ENCODE measurements at regions of chr1 and their contacts with region 1.

Region 1: DNA sequence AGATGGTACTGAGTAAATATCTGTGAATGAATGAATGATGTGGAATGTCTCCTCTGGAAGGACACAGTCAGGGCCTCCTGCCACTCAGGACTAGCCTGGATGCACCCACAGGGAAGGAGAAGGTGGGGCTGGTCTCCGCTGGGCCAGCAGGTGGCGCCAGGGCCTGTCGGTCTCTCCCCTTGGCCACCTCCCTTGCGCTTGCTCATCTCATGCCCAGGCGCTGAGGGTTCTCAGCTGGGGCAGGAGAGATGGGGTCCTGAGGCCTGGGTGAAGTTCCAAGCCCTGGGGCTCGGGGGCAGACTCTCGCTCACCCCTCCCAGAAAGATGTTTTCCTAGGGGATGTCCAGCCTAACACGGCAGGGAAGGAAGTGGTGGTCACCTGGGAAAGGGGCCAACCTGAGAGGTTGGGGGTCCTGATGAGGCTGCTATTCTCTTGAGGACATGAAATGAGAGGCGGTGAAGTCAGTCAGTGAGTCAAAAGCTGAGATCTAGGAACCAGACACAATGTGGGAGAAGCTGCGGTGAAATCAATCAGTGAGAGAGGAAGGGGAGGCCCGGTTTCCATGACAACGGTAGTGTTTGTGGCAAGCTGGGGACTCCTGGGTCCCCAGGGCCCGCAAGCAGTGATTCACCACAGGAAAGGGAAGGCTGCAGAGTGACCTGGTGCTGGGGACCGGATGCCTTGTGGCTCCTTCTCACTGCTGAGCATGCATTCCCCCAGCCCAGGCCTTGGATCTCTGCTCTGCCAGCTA is 14.6 kb upstream of the MEX3A start:
- H3K4me3 ChIP-seq: no peak overlapping the region
- H3K27ac ChIP-seq: no peak overlapping the region
- H3K4me1 ChIP-seq: no peaks in the 10 kb centered on the region
- CTCF ChIP-seq: peak; percentile 93

Region 2: GRCh38 chr1:156082309-156083091 is 14.3 kb before region 1 on chr1 and contains the start of gene MEX3A:
- CTCF ChIA-PET with region 1: interaction called, 11 read pairs
- POLR2A ChIA-PET with region 1: interaction called, 3 read pairs
- H3K4me3 ChIP-seq: peak within 1 kb of the TSS; percentile 77
- H3K27ac ChIP-seq: peak within 1 kb of the TSS; percentile 64
- H3K4me1 ChIP-seq: peaks cover 3% of the 10 kb centered on the region; the same call in 1 of the 2 replicates
- CTCF ChIP-seq: no peak; the same call in 1 of the 2 replicates

Region 3: DNA sequence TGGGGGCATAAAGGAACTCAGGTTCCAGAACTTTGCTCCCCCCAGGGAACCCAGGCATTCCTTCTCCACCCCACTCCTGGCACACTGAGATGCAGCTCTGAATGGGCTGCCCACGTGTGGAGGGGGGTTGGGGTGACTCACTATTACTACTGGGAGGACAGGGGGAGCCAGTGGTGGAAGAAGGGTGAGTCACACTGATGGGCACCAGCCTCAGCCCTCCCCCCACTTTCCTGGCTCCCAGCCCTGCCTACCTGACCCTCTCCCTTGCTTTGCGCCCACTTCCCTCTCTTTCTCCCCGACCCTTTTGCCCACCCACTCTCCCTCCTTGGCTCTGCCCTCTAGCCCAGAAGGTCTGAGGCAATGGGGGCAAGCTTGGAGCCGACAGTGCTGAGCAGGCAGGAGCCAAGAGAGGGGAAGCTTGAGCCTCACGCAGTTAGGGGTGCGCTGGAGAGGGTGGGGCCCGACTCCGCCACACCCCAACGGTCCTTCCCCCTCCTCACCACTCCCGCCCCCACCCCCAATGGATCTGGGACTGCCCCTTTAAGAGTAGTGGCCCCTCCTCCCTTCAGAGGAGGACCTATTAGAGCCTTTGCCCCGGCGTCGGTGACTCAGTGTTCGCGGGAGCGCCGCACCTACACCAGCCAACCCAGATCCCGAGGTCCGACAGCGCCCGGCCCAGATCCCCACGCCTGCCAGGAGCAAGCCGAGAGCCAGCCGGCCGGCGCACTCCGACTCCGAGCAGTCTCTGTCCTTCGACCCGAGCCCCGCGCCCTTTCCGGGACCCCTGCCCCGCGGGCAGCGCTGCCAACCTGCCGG is 17.5 kb after region 1 on chr1 and contains the start of gene LMNA:
- CTCF ChIA-PET with region 1: interaction called, 1,029 read pairs
- POLR2A ChIA-PET with region 1: interaction called, 63 read pairs
- H3K4me3 ChIP-seq: peak within 1 kb of the TSS; percentile 69
- H3K27ac ChIP-seq: peak within 1 kb of the TSS; percentile 66; the same call in 1 of the 2 replicates
- H3K4me1 ChIP-seq: peaks cover 4% of the 10 kb centered on the region
- CTCF ChIP-seq: peak; percentile 1; the same call in 1 of the 2 replicates

Region 4: DNA sequence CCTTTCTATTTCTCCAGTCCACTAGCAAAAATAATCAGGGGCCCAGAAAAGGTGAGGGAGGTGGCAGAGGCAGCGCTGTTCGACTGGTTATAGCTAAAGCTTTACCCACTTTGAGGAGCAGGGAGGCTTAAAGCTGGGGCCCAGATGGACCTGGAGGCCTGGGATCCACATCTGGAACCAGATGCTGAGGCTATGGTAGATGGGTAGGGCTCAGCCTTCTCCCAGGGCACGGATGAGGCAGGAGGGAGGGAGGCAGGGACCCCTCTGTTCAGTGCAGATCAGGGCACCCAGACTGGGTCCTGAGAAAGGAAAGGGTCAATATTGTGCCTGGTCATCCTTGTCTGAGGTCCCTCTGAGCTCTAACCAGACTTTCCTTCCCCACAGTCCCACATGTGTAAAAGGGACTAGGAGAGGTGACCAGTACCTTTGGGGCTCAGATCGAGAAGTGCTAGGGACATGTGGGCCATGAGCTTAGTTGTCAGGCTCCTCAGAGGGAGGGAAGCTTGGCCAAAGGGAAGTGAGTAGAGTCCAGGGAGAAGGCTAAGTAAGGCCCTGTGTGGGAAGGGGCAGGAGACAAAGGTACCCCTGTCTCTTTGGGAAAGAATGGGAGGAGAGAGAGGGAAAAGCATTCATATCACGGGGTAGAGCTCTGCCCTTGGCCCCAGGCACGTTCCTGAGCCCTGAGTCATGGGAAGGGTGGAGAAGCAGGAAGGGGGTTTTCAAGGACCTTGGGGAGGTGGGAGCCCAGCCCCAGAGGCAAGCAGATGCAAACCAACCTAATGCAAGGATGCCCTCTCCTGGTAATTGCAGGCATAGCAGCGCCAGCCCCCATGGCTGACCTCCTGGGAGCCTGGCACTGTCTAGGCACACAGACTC is 33.1 kb after region 1 on chr1:
- CTCF ChIA-PET with region 1: interaction called, 1,029 read pairs
- POLR2A ChIA-PET with region 1: interaction called, 16 read pairs
- H3K4me3 ChIP-seq: no peak overlapping the region
- H3K27ac ChIP-seq: peak overlapping the region; percentile 21
- H3K4me1 ChIP-seq: peaks cover 6% of the 10 kb centered on the region
- CTCF ChIP-seq: peak; percentile 93

Region 5: GRCh38 chr1:156136970-156137483 is 40.2 kb after region 1 on chr1:
- CTCF ChIA-PET with region 1: interaction called, 1,029 read pairs
- POLR2A ChIA-PET with region 1: interaction called, 3 read pairs
- H3K4me3 ChIP-seq: no peak overlapping the region
- H3K27ac ChIP-seq: no peak overlapping the region
- H3K4me1 ChIP-seq: no peaks in the 10 kb centered on the region
- CTCF ChIP-seq: peak; percentile 23; the same call in 1 of the 2 replicates

Measured in HEK293 (cell line).